T-cell (primary cell): ENCODE measurements at regions of chr16 and their contacts with region 1.

Region 1: GRCh38 chr16:8752706-8753105 is 44.7 kb downstream of the TMEM186 start:
- DNase-seq: no peak
- ATAC-seq: no peak
- H3K4me3 ChIP-seq: no peak overlapping the region
- H3K4me3 Mint-ChIP-seq: no peak overlapping the region
- H3K27ac ChIP-seq: no peak overlapping the region
- H3K27ac Mint-ChIP-seq: no peak overlapping the region
- H3K4me1 ChIP-seq: no peaks in the 10 kb centered on the region
- H3K4me1 Mint-ChIP-seq: no peaks in the 10 kb centered on the region
- H3K27me3 ChIP-seq: no peaks in the 10 kb centered on the region
- H3K27me3 Mint-ChIP-seq: no peaks in the 10 kb centered on the region

Region 2: GRCh38 chr16:8537691-8538342 is 214.9 kb before region 1 on chr16:
- CTCF ChIA-PET with region 1: no interaction called
- POLR2A ChIA-PET with region 1: interaction called in 1 of 2 experiments, 10 read pairs
- DNase-seq: no peak
- ATAC-seq: no peak
- H3K4me3 ChIP-seq: no peak overlapping the region
- H3K4me3 Mint-ChIP-seq: no peak overlapping the region
- H3K27ac ChIP-seq: no peak overlapping the region
- H3K27ac Mint-ChIP-seq: no peak overlapping the region
- H3K4me1 ChIP-seq: no peaks in the 10 kb centered on the region
- H3K4me1 Mint-ChIP-seq: no peaks in the 10 kb centered on the region
- H3K27me3 ChIP-seq: peaks cover 0 to 12% of the 10 kb centered on the region in 2 experiments
- H3K27me3 Mint-ChIP-seq: peaks cover 12 to 26% of the 10 kb centered on the region in 2 donors

Region 3: DNA sequence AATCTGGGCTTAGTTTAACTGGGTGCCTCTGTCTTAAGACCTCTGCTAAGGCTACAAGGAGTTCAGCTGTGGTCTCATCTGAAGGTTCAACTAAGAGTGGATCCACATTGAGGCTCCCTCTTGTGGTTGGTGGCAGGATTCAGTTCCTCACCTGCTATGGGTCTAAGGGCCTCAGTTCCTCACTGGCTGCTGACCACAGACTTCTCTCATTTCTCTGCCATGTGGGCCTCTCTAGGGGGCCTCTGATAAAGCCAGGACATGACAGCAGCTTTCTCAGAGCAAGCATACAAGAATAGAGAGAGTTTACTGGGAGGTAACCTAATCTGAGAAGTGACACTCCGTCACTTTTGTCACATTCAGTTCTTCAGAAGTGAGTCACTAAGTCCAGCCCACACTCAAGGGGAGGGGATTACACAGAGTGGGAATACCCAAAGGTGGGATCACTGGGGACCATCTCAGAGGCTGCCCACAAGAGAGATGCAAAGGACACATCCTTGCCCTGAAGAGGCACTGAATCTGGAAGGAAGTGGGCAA is 97.5 kb before region 1 on chr16:
- CTCF ChIA-PET with region 1: no interaction called
- POLR2A ChIA-PET with region 1: no interaction called
- DNase-seq: peak in 1 of 35 experiments; percentile 31
- ATAC-seq: peak in 1 of 4 experiments; percentile 37
- H3K4me3 ChIP-seq: no peak overlapping the region
- H3K4me3 Mint-ChIP-seq: no peak overlapping the region
- H3K27ac ChIP-seq: no peak overlapping the region
- H3K27ac Mint-ChIP-seq: no peak overlapping the region
- H3K4me1 ChIP-seq: no peaks in the 10 kb centered on the region
- H3K4me1 Mint-ChIP-seq: no peaks in the 10 kb centered on the region
- H3K27me3 ChIP-seq: no peaks in the 10 kb centered on the region
- H3K27me3 Mint-ChIP-seq: no peaks in the 10 kb centered on the region